ENCODE measurements at regions of chr18 and their contacts with region 1.

Region 1: GRCh38 chr18:13915995-13916431 is 677 bp upstream of the MC2R start:
- DNase-seq: no peak
- ATAC-seq: no peak
- H3K4me3 ChIP-seq: no peak overlapping the region
- H3K27ac ChIP-seq: no peak overlapping the region
- H3K4me1 ChIP-seq: no peaks in the 10 kb centered on the region
- H3K27me3 ChIP-seq: no peaks in the 10 kb centered on the region
- CTCF ChIP-seq: no peak

Region 2: GRCh38 chr18:13877134-13877533 is 38.9 kb before region 1 on chr18:
- intact Hi-C with region 1: loop called in 1 of 2 experiments (anchors 1 kb)
- DNase-seq: no peak
- ATAC-seq: no peak
- H3K4me3 ChIP-seq: no peak overlapping the region
- H3K27ac ChIP-seq: no peak overlapping the region
- H3K4me1 ChIP-seq: no peaks in the 10 kb centered on the region
- H3K27me3 ChIP-seq: peaks cover 0 to 4% (median 0%) of the 10 kb centered on the region in 3 donors
- CTCF ChIP-seq: no peak